Adrenal gland (tissue), 19 donors: ENCODE measurements at regions of chrX and their contacts with region 1.

Region 1: GRCh38 chrX:152950786-152951185 is 43.1 kb downstream of the PNMA5 start:
- DNase-seq: no peak
- H3K4me3 ChIP-seq: no peak overlapping the region
- H3K27ac ChIP-seq: no peak overlapping the region
- H3K4me1 ChIP-seq: no peaks in the 10 kb centered on the region
- H3K27me3 ChIP-seq: no peaks in the 10 kb centered on the region
- CTCF ChIP-seq: no peak
- POLR2A ChIP-seq: no peak

Region 2: DNA sequence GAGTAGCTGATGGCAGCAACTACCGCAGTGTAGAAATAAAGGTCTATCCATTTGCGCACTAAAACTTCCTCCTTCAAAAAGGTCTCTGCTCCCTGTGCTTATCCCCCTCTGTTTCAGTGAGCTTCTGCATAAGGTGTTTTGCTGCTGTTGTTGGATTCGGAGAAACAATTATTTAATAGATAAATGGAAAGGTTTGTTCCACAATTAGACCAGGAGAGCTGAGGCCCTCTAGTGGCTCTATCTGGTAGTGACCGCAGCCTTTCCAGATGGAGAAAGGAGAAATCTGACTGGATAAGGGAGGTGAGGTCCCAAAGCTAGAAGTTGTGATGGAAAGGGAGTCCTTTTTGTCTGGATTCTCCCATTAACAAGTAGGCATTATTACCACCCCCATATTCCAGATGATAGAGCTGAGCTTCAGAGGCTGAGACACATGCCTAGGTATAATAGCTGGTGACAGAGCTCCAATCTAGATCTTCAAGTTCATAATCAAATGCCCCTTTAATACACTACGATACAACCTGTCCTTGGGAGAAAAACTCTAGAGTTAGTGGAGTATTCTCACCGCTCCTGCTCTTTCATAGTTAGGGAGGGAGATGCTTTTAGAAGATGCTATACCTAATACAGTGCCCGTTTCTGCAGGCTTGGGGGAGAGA is 318.2 kb before region 1 on chrX:
- intact Hi-C with region 1: no loop called
- DNase-seq: peak; percentile 26 to 83 (median 61)
- H3K4me3 ChIP-seq: no peak overlapping the region
- H3K27ac ChIP-seq: no peak overlapping the region
- H3K4me1 ChIP-seq: no peaks in the 10 kb centered on the region
- H3K27me3 ChIP-seq: peaks cover 11% of the 10 kb centered on the region
- CTCF ChIP-seq: peak; percentile 62 to 85 (median 70)
- POLR2A ChIP-seq: no peak

Region 3: DNA sequence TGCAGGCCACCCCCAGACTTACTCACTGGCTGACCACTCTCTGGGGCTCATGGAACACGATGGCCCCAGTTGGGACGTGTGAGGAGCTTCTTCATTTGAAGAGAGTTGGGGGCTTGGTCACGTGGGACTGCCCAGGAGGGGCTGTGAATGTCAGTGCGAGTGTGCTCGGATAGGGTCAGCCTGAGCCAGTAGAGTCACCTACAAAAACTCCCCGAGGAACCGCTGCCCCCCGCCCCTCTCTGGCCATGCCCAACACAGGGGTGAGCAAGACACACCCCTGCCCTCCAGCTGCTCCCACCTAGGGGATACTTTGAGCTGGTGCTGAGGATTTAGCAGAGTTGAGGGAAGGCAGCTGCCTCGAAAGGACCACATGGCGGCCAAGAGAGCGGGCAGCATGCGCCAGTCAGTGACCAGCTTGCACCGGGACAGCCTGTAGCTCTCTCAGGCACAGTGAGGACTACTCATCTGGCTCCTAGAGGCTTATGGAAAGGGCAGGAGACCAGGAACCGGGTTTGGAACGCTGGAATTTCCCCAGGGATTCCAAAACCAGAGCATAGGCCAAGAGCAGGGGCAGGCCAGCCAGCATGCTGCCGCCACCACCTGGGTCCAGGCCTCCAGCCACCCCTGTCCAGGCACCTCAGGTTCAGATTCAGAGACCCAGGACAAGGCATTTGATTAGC is 442.0 kb after region 1 on chrX:
- intact Hi-C with region 1: loop called in 1 of 2 experiments (anchors 5 kb)
- DNase-seq: peak in 1 of 7 donors; percentile 5
- H3K4me3 ChIP-seq: no peak overlapping the region
- H3K27ac ChIP-seq: no peak overlapping the region
- H3K4me1 ChIP-seq: no peaks in the 10 kb centered on the region
- H3K27me3 ChIP-seq: no peaks in the 10 kb centered on the region
- CTCF ChIP-seq: no peak
- POLR2A ChIP-seq: no peak